ENCODE measurements at regions of chrX and their contacts with region 1.

Region 1: GRCh38 chrX:47093248-47093647 is 15.0 kb downstream of the RGN start:
- DNase-seq: peak; percentile 1
- ATAC-seq: no peak
- H3K4me3 ChIP-seq: no peak overlapping the region
- H3K27ac ChIP-seq: no peak overlapping the region
- H3K4me1 ChIP-seq: no peaks in the 10 kb centered on the region
- H3K27me3 ChIP-seq: no peaks in the 10 kb centered on the region
- CTCF ChIP-seq: peak; percentile 53; the same call in 1 of the 2 replicates

Region 2: GRCh38 chrX:46803140-46803539 is 290.1 kb before region 1 on chrX:
- CTCF ChIA-PET with region 1: no interaction called
- POLR2A ChIA-PET with region 1: no interaction called
- in situ Hi-C with region 1: no loop called
- intact Hi-C with region 1: loop called (anchors 5 kb)
- DNase-seq: no peak
- ATAC-seq: peak; percentile 73
- H3K4me3 ChIP-seq: no peak overlapping the region
- H3K27ac ChIP-seq: no peak overlapping the region
- H3K4me1 ChIP-seq: no peaks in the 10 kb centered on the region
- H3K27me3 ChIP-seq: no peaks in the 10 kb centered on the region
- CTCF ChIP-seq: peak; percentile 63

Measured in Panc1 (cell line).